A673 (cell line): ENCODE measurements at regions of chr18 and their contacts with region 1.

Region 1: GRCh38 chr18:9943311-9943710 is 29.5 kb downstream of the VAPA start:
- DNase-seq: no peak
- H3K4me3 ChIP-seq: no peak overlapping the region
- H3K27ac ChIP-seq: no peak overlapping the region
- H3K4me1 ChIP-seq: peaks cover 4% of the 10 kb centered on the region
- H3K27me3 ChIP-seq: no peaks in the 10 kb centered on the region
- CTCF ChIP-seq: no peak

Region 2: GRCh38 chr18:9683407-9684396 is 259.6 kb before region 1 on chr18:
- CTCF ChIA-PET with region 1: no interaction called
- POLR2A ChIA-PET with region 1: no interaction called
- intact Hi-C with region 1: loop called (anchors 10 kb)
- DNase-seq: peak; percentile 70
- H3K4me3 ChIP-seq: no peak overlapping the region
- H3K27ac ChIP-seq: no peak overlapping the region
- H3K4me1 ChIP-seq: peaks cover 4% of the 10 kb centered on the region
- H3K27me3 ChIP-seq: no peaks in the 10 kb centered on the region
- CTCF ChIP-seq: peak; percentile 53

Region 3: GRCh38 chr18:9894454-9895068 is 48.8 kb before region 1 on chr18:
- CTCF ChIA-PET with region 1: no interaction called
- POLR2A ChIA-PET with region 1: no interaction called
- intact Hi-C with region 1: no loop called
- DNase-seq: no peak
- H3K4me3 ChIP-seq: no peak overlapping the region
- H3K27ac ChIP-seq: no peak overlapping the region
- H3K4me1 ChIP-seq: peaks cover 5% of the 10 kb centered on the region
- H3K27me3 ChIP-seq: no peaks in the 10 kb centered on the region
- CTCF ChIP-seq: no peak